K562 (cell line): ENCODE measurements at regions of chr11 and their contacts with region 1.

Region 1: GRCh38 chr11:108121274-108122155 is at the start of gene ACAT1:
- DNase-seq: peak; percentile 94 to 98 (median 96)
- ATAC-seq: peak; percentile 96
- H3K4me3 ChIP-seq: peak within 1 kb of the TSS; percentile 58
- H3K27ac ChIP-seq: peak within 1 kb of the TSS; percentile 74
- H3K4me1 ChIP-seq: peaks cover 29 to 30% of the 10 kb centered on the region in 2 experiments; a peak in 4 of 5 replicates
- H3K27me3 ChIP-seq: no peaks in the 10 kb centered on the region
- CTCF ChIP-seq: peak; percentile 29 to 34 (median 29); a peak in 3 of 6 replicates
- EP300 ChIP-seq: no peak; the same call in 1 of the 2 replicates
- POLR2A ChIP-seq: peak; percentile 91
- RAD21 ChIP-seq: no peak
- polyA plus RNA-seq, gene ACAT1: 74.0 to 100 TPM

Region 2: GRCh38 chr11:107791343-107792048 is 330.0 kb before region 1 on chr11:
- CTCF ChIA-PET with region 1: no interaction called
- POLR2A ChIA-PET with region 1: no interaction called
- in situ Hi-C with region 1: no loop called
- intact Hi-C with region 1: no loop called
- DNase-seq: no peak
- ATAC-seq: no peak
- H3K4me3 ChIP-seq: no peak overlapping the region
- H3K27ac ChIP-seq: no peak overlapping the region
- H3K4me1 ChIP-seq: no peaks in the 10 kb centered on the region; a peak in 1 of 5 replicates
- H3K27me3 ChIP-seq: no peaks in the 10 kb centered on the region
- CTCF ChIP-seq: no peak
- EP300 ChIP-seq: no peak
- POLR2A ChIP-seq: no peak
- RAD21 ChIP-seq: no peak

Region 3: GRCh38 chr11:107999759-108000455 is 121.6 kb before region 1 on chr11:
- CTCF ChIA-PET with region 1: no interaction called
- POLR2A ChIA-PET with region 1: no interaction called
- in situ Hi-C with region 1: no loop called
- intact Hi-C with region 1: loop called (anchors 5 kb)
- DNase-seq: peak; percentile 58 to 84 (median 70)
- ATAC-seq: peak; percentile 99
- H3K4me3 ChIP-seq: no peak overlapping the region
- H3K27ac ChIP-seq: no peak overlapping the region
- H3K4me1 ChIP-seq: 0 out of 5 replicates have a peak, but pooled peaks cover 0 to 3% of the 10 kb centered on the region in 2 experiments
- H3K27me3 ChIP-seq: no peaks in the 10 kb centered on the region; a peak in 1 of 5 replicates
- CTCF ChIP-seq: peak; percentile 87 to 99 (median 97)
- EP300 ChIP-seq: no peak
- POLR2A ChIP-seq: no peak
- RAD21 ChIP-seq: peak; percentile 60 to 81

Region 4: DNA sequence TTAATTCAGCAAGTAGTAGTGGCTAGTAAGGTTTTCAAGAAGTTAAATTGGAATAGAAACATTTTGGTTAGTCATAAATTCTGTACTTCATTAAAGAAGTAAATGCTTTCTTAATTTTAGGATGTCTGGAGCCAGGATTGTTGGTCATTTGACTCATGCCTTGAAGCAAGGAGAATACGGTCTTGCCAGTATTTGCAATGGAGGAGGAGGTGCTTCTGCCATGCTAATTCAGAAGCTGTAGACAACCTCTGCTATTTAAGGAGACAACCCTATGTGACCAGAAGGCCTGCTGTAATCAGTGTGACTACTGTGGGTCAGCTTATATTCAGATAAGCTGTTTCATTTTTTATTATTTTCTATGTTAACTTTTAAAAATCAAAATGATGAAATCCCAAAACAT is 25.6 kb after region 1 on chr11:
- CTCF ChIA-PET with region 1: no interaction called
- POLR2A ChIA-PET with region 1: interaction called, 8 read pairs
- in situ Hi-C with region 1: no loop called
- intact Hi-C with region 1: loop called (anchors 2 kb)
- DNase-seq: no peak
- ATAC-seq: no peak
- H3K4me3 ChIP-seq: no peak overlapping the region
- H3K27ac ChIP-seq: no peak overlapping the region
- H3K4me1 ChIP-seq: peaks cover 0 to 4% of the 10 kb centered on the region in 2 experiments; a peak in 2 of 5 replicates
- H3K27me3 ChIP-seq: no peaks in the 10 kb centered on the region
- CTCF ChIP-seq: no peak
- EP300 ChIP-seq: no peak
- POLR2A ChIP-seq: no peak
- RAD21 ChIP-seq: no peak

Region 5: GRCh38 chr11:108497317-108498045 is 376.0 kb after region 1 on chr11:
- CTCF ChIA-PET with region 1: no interaction called
- POLR2A ChIA-PET with region 1: no interaction called
- in situ Hi-C with region 1: no loop called
- intact Hi-C with region 1: loop called (anchors 10 kb)
- DNase-seq: peak; percentile 73 to 97 (median 81)
- ATAC-seq: peak; percentile 88
- H3K4me3 ChIP-seq: peak overlapping the region; percentile 59
- H3K27ac ChIP-seq: peak overlapping the region; percentile 97
- H3K4me1 ChIP-seq: peaks cover 17 to 37% of the 10 kb centered on the region in 2 experiments
- H3K27me3 ChIP-seq: no peaks in the 10 kb centered on the region
- CTCF ChIP-seq: no peak
- EP300 ChIP-seq: peak; percentile 59; the same call in 1 of the 2 replicates
- POLR2A ChIP-seq: peak; percentile 95
- RAD21 ChIP-seq: no peak

Region 6: GRCh38 chr11:108593214-108593922 is 471.9 kb after region 1 on chr11 and contains the start of gene EXPH5:
- CTCF ChIA-PET with region 1: no interaction called
- POLR2A ChIA-PET with region 1: interaction called, 3 read pairs
- in situ Hi-C with region 1: no loop called
- intact Hi-C with region 1: loop called (anchors 5 kb)
- DNase-seq: peak; percentile 96 to 98 (median 98)
- ATAC-seq: peak; percentile 95
- H3K4me3 ChIP-seq: peak within 1 kb of the TSS; percentile 77
- H3K27ac ChIP-seq: peak within 1 kb of the TSS; percentile 91
- H3K4me1 ChIP-seq: peaks cover 11 to 30% of the 10 kb centered on the region in 2 experiments; a peak in 4 of 5 replicates
- H3K27me3 ChIP-seq: no peaks in the 10 kb centered on the region
- CTCF ChIP-seq: peak in 2 of 3 experiments; percentile 17 to 22; a peak in 1 of 6 replicates
- EP300 ChIP-seq: no peak
- POLR2A ChIP-seq: peak; percentile 81
- RAD21 ChIP-seq: 0 out of 4 replicates have a peak, but pooled peaks of 1 of the 2 experiments have one; percentile 4
- polyA plus RNA-seq, gene EXPH5: 1.3 to 4.8 TPM